PC-9 (cell line): ENCODE measurements at regions of chr5 and their contacts with region 1.

Region 1: DNA sequence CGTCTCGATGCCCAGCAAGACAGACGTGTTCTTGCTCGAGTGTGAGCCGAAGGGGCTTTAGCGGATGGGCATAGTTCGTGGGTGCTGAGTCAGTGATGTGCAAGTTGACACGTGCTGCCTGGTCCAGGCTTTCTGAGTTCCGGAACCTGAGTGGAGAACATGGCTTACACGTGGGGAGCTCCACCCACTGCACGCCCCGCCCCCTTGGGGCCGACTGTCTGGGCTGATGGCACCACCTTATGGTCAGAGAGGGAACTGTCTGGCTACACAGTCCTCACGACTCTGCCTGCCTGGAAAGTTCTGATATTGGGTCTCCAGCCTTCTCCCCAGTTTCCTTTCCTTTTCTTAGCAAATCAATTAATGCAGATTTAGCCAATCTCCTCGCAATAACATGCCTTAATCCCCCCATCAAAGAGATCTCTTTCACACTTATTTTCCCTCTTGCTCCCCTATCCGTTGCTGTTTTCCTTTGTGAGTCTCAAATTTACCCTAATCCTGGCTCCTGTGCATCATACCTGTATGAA is 3.8 kb upstream of the STC2 start:
- DNase-seq: peak; percentile 55 to 57
- H3K4me3 ChIP-seq: no peak overlapping the region
- H3K27ac ChIP-seq: peak overlapping the region; percentile 100; the same call in 1 of the 2 replicates
- H3K4me1 ChIP-seq: peaks cover 64% of the 10 kb centered on the region
- H3K27me3 ChIP-seq: no peaks in the 10 kb centered on the region
- CTCF ChIP-seq: peak; percentile 72

Region 2: DNA sequence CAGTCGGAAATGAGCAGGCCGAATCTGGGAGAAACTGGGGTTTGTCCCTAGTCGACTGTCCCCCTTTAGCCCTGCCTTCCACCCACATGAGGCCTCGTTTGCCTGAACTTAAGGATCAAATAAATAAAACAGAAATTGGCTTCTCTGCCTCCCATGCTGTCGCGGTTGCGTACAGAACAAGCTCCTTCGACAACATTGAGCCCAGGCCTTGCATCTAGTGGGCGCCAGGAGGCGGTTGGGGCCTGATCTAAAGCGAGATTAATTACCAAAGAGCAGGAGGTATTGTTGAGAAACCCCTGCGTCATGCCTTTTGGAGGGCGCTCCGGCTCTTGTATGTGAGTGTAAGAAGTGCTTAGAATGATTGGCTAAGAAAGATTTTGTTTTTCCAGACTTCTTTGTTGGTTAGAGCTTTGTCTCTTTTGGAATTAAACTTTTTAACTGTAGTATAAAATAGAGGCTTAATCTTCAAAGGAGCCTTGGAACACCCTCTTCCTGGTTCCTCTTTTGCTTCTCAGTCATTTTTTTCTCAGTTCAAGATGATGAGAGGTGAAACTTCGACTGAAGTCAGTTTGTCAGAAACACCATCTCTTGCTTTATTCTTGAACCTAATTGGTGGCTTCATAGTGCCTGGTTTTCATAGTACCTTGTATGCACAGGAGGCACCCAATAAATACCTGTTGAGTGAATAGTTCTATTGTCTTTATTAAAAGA is 347.6 kb before region 1 on chr5:
- CTCF ChIA-PET with region 1: interaction called, 3 read pairs
- POLR2A ChIA-PET with region 1: no interaction called
- intact Hi-C with region 1: loop called (anchors 5 kb)
- DNase-seq: peak; percentile 63 to 79
- H3K4me3 ChIP-seq: peak overlapping the region; percentile 87
- H3K27ac ChIP-seq: peak overlapping the region; percentile 77
- H3K4me1 ChIP-seq: peaks cover 13% of the 10 kb centered on the region; the same call in 1 of the 2 replicates
- H3K27me3 ChIP-seq: no peaks in the 10 kb centered on the region
- CTCF ChIP-seq: peak; percentile 65

Region 3: GRCh38 chr5:173303878-173304590 is 28.0 kb before region 1 on chr5:
- CTCF ChIA-PET with region 1: interaction called, 4 read pairs
- POLR2A ChIA-PET with region 1: interaction called, 8 read pairs
- intact Hi-C with region 1: loop called (anchors 1 kb)
- DNase-seq: peak; percentile 87 to 88
- H3K4me3 ChIP-seq: no peak overlapping the region
- H3K27ac ChIP-seq: peak overlapping the region; percentile 86
- H3K4me1 ChIP-seq: peaks cover 41% of the 10 kb centered on the region
- H3K27me3 ChIP-seq: no peaks in the 10 kb centered on the region
- CTCF ChIP-seq: no peak

Region 4: GRCh38 chr5:173378727-173379126 is 46.7 kb after region 1 on chr5:
- CTCF ChIA-PET with region 1: no interaction called
- POLR2A ChIA-PET with region 1: no interaction called
- intact Hi-C with region 1: no loop called
- DNase-seq: no peak
- H3K4me3 ChIP-seq: no peak overlapping the region
- H3K27ac ChIP-seq: no peak overlapping the region
- H3K4me1 ChIP-seq: no peaks in the 10 kb centered on the region
- H3K27me3 ChIP-seq: no peaks in the 10 kb centered on the region
- CTCF ChIP-seq: no peak

Region 5: GRCh38 chr5:173486355-173487225 is 154.6 kb after region 1 on chr5:
- CTCF ChIA-PET with region 1: no interaction called
- POLR2A ChIA-PET with region 1: no interaction called
- intact Hi-C with region 1: no loop called
- DNase-seq: no peak
- H3K4me3 ChIP-seq: no peak overlapping the region
- H3K27ac ChIP-seq: no peak overlapping the region
- H3K4me1 ChIP-seq: peaks cover 26% of the 10 kb centered on the region
- H3K27me3 ChIP-seq: no peaks in the 10 kb centered on the region
- CTCF ChIP-seq: no peak

Region 6: DNA sequence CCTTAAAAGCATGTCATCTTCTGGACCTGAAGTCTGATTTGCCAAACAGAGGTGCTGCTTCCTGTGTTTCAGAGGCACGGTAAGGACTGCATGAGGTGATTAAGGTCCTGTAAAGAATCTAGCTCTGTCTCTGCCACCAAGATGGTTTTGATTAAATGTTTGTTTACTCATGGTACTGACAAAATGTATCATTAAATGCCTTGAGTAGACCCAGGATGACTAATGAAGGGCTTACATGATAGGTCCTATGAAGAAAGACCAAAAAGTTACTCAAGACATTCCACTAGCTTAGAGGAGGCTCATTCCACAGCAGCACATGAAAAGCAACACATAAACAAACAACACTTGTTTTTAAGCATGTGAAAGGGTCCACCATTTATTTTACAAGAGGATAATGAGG is 183.5 kb after region 1 on chr5:
- CTCF ChIA-PET with region 1: no interaction called
- POLR2A ChIA-PET with region 1: no interaction called
- intact Hi-C with region 1: loop called (anchors 1 kb)
- DNase-seq: peak in 1 of 2 experiments; percentile 93
- H3K4me3 ChIP-seq: no peak overlapping the region
- H3K27ac ChIP-seq: peak overlapping the region; percentile 94
- H3K4me1 ChIP-seq: peaks cover 42% of the 10 kb centered on the region
- H3K27me3 ChIP-seq: no peaks in the 10 kb centered on the region
- CTCF ChIP-seq: no peak

Region 7: DNA sequence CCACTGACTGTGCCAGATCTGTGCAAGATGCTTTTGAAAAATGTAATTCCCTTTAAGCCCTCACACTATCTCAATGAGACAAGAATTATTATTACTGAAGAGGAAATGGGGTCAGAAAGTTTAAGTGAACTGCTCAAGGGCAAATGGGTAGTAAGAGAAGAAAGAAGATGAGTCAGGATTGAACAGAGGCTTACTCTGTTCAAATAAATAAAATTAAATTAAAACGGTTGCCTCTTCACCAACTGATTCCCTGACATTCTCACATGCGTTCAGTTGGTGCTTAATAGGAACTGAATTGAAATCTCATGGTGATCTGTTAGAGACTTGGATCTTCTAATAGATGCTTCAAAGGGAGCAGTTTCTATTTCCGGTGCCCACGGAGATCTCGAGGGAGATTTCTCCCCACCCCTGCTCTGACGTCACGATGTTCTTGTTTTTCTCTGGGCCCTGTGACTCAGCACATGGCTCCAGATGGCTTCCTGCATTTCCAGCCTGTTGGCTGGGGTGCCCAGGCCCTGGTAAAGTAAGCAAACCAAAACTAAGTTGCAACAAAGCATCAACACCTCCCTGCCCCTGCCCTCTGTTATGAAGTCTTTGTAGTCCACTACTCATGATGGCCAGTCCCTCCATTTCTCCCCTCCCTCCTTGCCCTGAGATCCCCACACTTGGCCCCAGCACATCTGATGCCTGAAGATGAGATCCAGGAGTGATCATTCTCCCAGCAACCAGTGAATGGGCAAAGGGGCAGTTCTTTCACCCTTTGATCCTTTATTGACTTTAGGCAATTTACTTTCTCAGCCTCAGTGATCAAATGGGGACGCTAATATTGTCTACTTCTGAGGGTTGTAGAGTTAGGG is 450.0 kb after region 1 on chr5:
- CTCF ChIA-PET with region 1: no interaction called
- POLR2A ChIA-PET with region 1: no interaction called
- intact Hi-C with region 1: loop called (anchors 10 kb)
- DNase-seq: peak; percentile 56 to 62
- H3K4me3 ChIP-seq: peak overlapping the region; percentile 7; the same call in 1 of the 2 replicates
- H3K27ac ChIP-seq: peak overlapping the region; percentile 78
- H3K4me1 ChIP-seq: peaks cover 47% of the 10 kb centered on the region
- H3K27me3 ChIP-seq: no peaks in the 10 kb centered on the region
- CTCF ChIP-seq: no peak